ENCODE measurements at regions of chr12 and their contacts with region 1.

Region 1: DNA sequence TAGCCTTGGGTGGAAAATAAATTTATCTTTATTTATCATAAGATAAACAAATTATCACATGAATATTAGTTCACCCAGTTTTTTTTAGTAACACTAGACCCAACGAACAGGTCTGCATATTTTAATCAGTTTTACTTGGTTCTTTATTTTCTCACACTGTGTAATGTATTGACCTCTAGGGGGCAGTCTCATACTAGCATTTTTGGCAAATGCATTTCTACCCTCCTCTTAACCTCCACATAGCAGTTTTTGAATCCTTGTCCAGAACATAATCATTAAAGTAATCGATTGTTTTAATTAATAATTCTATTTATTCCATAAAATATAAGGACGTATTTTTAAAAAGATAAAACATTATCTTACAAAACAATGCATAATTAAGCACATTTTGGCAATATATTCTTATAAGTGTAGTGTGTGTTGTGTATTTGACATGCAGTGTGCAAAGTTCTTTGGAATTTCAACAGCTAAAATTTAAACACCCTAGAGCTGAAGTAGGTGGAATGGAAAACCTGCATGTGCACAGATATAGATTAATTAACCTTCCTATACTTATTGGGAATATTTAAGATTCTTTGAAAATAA is 31.6 kb upstream of the PTPRQ start:
- DNase-seq: no peak
- H3K4me3 Mint-ChIP-seq: no peak overlapping the region
- H3K27ac Mint-ChIP-seq: no peak overlapping the region
- H3K4me1 Mint-ChIP-seq: no peaks in the 10 kb centered on the region
- H3K27me3 Mint-ChIP-seq: no peaks in the 10 kb centered on the region

Region 2: DNA sequence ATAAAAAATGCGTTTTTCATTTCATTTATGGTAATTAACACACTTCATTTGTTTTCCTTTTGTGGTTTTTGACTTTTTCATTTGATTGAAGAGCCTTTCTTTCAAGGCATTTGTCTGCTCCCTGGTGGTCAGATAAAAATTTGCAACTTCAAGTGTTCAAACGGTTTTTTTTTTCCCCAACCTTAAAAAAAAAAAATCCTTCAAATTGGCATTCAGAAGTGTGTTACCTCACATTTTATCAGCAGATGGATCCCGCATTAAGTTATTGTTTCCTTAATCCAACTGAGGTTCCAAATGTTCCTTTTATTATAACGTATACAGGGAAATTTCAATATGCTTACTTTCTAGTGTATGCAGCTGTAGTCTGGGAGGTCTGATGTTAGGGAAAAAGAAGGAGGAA is 351.4 kb after region 1 on chr12:
- CTCF ChIA-PET with region 1: no interaction called
- POLR2A ChIA-PET with region 1: no interaction called
- intact Hi-C with region 1: loop called (anchors 2 kb)
- DNase-seq: no peak
- H3K4me3 Mint-ChIP-seq: no peak overlapping the region
- H3K27ac Mint-ChIP-seq: no peak overlapping the region
- H3K4me1 Mint-ChIP-seq: no peaks in the 10 kb centered on the region
- H3K27me3 Mint-ChIP-seq: no peaks in the 10 kb centered on the region

Region 3: GRCh38 chr12:81128930-81129554 is 716.6 kb after region 1 on chr12:
- CTCF ChIA-PET with region 1: no interaction called
- POLR2A ChIA-PET with region 1: no interaction called
- intact Hi-C with region 1: loop called (anchors 2 kb)
- DNase-seq: no peak
- H3K4me3 Mint-ChIP-seq: no peak overlapping the region
- H3K27ac Mint-ChIP-seq: no peak overlapping the region
- H3K4me1 Mint-ChIP-seq: no peaks in the 10 kb centered on the region
- H3K27me3 Mint-ChIP-seq: no peaks in the 10 kb centered on the region

Region 4: DNA sequence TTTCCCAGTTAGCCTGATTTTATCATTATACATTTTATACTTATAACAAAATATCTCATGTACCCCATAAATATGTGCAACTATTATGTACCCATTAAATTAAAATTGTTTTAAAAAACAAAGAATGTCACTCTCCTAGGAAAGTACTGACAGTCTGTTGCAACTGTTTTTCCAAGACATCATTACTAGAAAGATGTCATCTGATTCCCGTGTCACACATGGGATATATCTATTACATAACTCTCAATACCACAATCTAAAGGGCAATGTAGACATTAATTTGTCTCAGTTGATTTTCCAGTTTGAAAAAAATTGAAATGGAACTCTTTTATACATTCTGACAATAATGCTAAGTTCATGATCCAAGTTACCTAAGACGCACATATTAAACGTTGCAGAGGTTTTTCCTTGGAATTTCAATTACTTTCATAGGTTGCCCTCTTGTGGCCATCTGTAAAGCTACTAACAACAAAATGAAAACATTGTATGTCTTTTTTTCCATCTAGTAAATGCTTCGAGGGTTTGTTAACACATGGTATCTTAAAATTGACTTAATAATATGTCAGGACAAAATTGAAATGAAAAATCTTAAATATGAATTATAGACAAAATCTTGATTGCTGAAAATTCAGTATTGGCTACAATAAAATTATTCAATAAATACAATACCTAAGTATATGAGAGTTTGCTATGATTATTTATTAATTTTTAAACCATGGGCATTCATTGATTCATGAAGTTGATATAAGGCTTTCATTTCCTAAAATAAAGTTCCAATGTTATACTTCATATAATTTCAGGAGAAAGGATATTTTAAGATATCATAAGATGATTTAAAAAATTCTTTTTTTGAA is 1215.1 kb after region 1 on chr12:
- CTCF ChIA-PET with region 1: no interaction called
- POLR2A ChIA-PET with region 1: no interaction called
- intact Hi-C with region 1: loop called (anchors 2 kb)
- DNase-seq: no peak
- H3K4me3 Mint-ChIP-seq: no peak overlapping the region
- H3K27ac Mint-ChIP-seq: no peak overlapping the region
- H3K4me1 Mint-ChIP-seq: no peaks in the 10 kb centered on the region
- H3K27me3 Mint-ChIP-seq: no peaks in the 10 kb centered on the region

Measured in activated CD4-positive, alpha-beta memory T cell treated with anti-CD3 and anti-CD28 coated beads for 36 hours (primary cell).